ENCODE measurements at regions of chr2 and their contacts with region 1.

Region 1: DNA sequence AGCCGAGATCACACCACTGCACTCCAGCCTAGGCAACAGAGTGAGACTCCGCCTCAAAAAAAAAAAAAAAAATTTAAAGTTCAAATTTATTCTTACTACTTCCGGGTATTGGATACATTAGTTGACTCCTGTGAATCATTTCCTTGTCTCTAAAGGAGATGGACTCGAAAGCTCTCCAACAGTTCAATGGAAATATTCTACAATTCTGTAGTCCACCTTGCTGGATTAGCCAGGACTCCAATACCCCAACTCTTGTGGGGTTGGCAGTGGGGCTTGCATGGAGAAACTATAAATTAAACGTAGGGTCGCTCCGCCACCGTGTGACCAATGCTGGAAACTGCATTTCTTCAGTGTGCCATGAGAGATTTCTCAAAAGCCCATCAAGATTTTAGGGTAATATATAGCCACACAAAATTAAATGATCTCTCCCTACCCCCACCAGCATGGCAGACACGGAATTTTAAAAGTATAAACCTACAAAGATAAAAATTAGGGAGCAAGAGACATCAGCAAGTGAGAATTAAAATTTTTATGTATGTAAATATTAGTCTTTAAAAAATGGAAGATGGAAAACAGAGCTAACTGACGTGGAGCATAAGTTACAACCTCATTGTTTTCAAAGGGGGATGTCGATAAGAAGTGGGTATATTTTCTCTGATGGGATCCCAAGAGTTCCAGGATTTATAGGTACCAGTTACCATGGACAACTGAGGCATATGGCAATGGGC is 27.8 kb upstream of the GAREM2 start:
- DNase-seq: peak; percentile 40 to 52
- H3K4me3 ChIP-seq: no peak overlapping the region
- H3K27ac ChIP-seq: no peak overlapping the region
- H3K4me1 ChIP-seq: no peaks in the 10 kb centered on the region
- H3K27me3 ChIP-seq: no peaks in the 10 kb centered on the region
- CTCF ChIP-seq: peak; percentile 65 to 74 (median 68)
- POLR2A ChIP-seq: no peak

Region 2: DNA sequence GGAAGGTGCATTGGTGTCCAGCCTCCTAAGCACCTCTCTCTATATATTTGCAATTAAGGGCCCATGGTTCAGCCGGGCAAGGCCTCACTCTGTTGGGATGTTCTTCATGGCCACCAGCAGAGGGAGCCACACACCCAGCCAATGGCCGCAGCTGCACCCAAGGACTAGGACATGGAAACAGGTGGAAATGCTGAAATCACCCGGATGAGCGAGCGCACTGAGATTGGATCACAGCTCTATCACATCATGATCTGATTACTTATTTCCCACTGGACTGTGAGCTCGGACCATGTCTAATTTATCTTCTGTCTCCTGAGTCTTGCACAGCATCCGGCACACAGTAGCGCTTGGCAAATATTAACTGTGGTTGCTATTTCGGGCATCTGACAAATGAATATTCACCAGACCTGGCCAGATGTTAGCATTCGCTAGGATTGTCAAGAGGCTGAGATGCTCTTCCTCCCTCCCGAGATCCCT is 194.0 kb before region 1 on chr2:
- intact Hi-C with region 1: loop called (anchors 10 kb)
- DNase-seq: peak; percentile 65 to 75
- H3K4me3 ChIP-seq: no peak overlapping the region
- H3K27ac ChIP-seq: no peak overlapping the region
- H3K4me1 ChIP-seq: no peaks in the 10 kb centered on the region
- H3K27me3 ChIP-seq: no peaks in the 10 kb centered on the region
- CTCF ChIP-seq: peak; percentile 87 to 91 (median 90)
- POLR2A ChIP-seq: no peak

Region 3: GRCh38 chr2:25982273-25982967 is 162.7 kb before region 1 on chr2 and contains the start of gene KIF3C:
- intact Hi-C with region 1: loop called (anchors 10 kb)
- DNase-seq: peak; percentile 62 to 70
- H3K4me3 ChIP-seq: peak within 1 kb of the TSS; percentile 68 to 89
- H3K27ac ChIP-seq: peak within 1 kb of the TSS; percentile 69 to 77
- H3K4me1 ChIP-seq: peaks cover 0 to 5% of the 10 kb centered on the region in 2 donors
- H3K27me3 ChIP-seq: no peaks in the 10 kb centered on the region
- CTCF ChIP-seq: no peak
- POLR2A ChIP-seq: no peak
- total RNA-seq, gene KIF3C: 3.5 to 12.6 (median 7.4) TPM

Measured in uterus (tissue), 4 donors.